ENCODE measurements at regions of chr2 and their contacts with region 1.

Region 1: DNA sequence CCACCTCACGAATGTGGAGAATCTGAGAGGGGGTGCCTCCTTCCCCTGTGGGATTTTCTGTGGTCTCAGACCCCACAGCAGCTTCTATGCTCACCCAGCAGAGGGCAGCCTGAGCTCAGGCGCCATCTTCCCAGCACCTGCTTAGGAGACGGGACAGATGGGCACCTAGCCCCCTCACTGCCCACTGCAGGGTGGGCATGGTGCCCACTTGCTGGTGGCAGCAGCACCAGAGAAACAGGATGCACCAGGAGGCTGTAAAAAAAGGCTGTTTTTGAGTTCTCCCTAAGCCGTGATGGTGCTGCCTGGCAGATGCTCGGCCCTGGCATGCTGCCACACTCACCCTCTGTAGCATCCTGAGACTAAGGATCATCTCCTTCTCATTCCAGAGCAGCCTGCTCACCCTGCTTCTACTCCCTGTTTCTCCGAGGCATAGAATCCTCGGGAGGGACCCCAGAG is 19.1 kb upstream of the SLC20A1 start:
- DNase-seq: no peak
- ATAC-seq: peak; percentile 75
- H3K4me3 ChIP-seq: peak overlapping the region in 1 of 2 experiments; percentile 38; a peak in 3 of 4 replicates
- H3K27ac ChIP-seq: peak overlapping the region; percentile 49
- H3K4me1 ChIP-seq: peaks cover 56 to 100% of the 10 kb centered on the region in 2 experiments
- H3K27me3 ChIP-seq: no peaks in the 10 kb centered on the region
- CTCF ChIP-seq: peak; percentile 91 to 96 (median 95)
- POLR2A ChIP-seq: no peak
- RAD21 ChIP-seq: peak; percentile 97

Region 2: DNA sequence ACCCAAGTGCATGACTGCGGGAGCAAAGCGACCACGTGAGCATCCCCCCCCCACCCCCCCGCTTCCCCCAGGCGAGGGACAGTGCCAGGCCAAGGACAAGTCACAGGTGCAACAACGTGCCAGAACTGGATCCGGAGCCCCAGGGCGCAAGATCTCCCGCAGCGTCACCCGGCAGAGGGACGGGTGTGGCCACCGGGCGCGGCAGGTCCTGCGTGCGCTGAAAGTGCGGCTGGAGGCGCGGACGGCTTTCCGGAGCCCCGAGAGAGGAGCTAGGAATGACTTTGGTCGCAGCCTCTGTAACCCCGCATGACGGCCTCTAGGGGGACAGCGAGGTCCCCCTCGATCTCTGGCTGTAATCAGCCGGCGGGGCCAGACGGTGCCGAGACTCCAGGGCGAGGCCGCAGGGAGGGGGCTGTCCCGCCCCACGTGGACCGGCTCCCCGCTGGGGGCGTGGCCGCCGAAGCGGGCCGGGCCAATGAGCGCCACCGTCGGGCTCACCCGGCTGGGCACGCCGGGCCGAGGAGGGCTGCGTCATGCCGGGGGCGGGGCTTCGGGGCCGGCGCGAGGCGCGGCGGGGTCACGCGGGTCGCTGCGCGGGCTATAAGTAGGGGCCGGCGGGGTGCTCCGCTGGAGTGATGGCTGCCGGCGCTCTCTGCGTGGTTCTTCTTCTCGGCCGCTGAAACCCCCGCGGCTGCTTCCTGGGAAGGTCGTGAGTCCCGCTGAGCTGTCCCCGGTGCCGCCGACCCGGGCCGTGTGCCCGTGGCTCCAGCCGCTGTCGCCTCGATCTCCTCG is 18.9 kb after region 1 on chr2 and contains the start of gene SLC20A1:
- CTCF ChIA-PET with region 1: interaction called, 18 read pairs
- POLR2A ChIA-PET with region 1: interaction called, 86 read pairs
- RAD21 ChIA-PET with region 1: interaction called in 1 of 2 experiments, 4 read pairs
- intact Hi-C with region 1: loop called (anchors 1 kb)
- DNase-seq: peak; percentile 86
- ATAC-seq: peak; percentile 85
- H3K4me3 ChIP-seq: peak within 1 kb of the TSS; percentile 84 to 88
- H3K27ac ChIP-seq: peak within 1 kb of the TSS; percentile 85
- H3K4me1 ChIP-seq: peaks cover 48 to 61% of the 10 kb centered on the region in 2 experiments
- H3K27me3 ChIP-seq: no peaks in the 10 kb centered on the region
- CTCF ChIP-seq: peak in 1 of 3 experiments; percentile 34; a peak in 2 of 6 replicates
- POLR2A ChIP-seq: peak; percentile 94
- RAD21 ChIP-seq: no peak
- total RNA-seq, gene SLC20A1: 154 TPM